Left lung (tissue), 14 donors: ENCODE measurements at regions of chr4 and their contacts with region 1.

Region 1: GRCh38 chr4:140059159-140059558 is 94.8 kb downstream of the MAML3 start:
- DNase-seq: peak in 1 of 4 donors; percentile 50
- ATAC-seq: peak; percentile 88
- H3K4me3 ChIP-seq: no peak overlapping the region
- H3K27ac ChIP-seq: peak overlapping the region in 1 of 2 donors; percentile 33
- H3K4me1 ChIP-seq: peaks cover 3 to 40% of the 10 kb centered on the region in 2 donors
- H3K27me3 ChIP-seq: no peaks in the 10 kb centered on the region
- CTCF ChIP-seq: no peak

Region 2: GRCh38 chr4:139734875-139735380 is 324.2 kb before region 1 on chr4:
- intact Hi-C with region 1: no loop called
- DNase-seq: peak; percentile 89 to 96 (median 92)
- ATAC-seq: peak; percentile 99
- H3K4me3 ChIP-seq: peak overlapping the region; percentile 31 to 45
- H3K27ac ChIP-seq: peak overlapping the region; percentile 86 to 87
- H3K4me1 ChIP-seq: peaks cover 11 to 52% of the 10 kb centered on the region in 2 donors
- H3K27me3 ChIP-seq: peaks cover 0 to 12% of the 10 kb centered on the region in 2 donors
- CTCF ChIP-seq: peak; percentile 79

Region 3: DNA sequence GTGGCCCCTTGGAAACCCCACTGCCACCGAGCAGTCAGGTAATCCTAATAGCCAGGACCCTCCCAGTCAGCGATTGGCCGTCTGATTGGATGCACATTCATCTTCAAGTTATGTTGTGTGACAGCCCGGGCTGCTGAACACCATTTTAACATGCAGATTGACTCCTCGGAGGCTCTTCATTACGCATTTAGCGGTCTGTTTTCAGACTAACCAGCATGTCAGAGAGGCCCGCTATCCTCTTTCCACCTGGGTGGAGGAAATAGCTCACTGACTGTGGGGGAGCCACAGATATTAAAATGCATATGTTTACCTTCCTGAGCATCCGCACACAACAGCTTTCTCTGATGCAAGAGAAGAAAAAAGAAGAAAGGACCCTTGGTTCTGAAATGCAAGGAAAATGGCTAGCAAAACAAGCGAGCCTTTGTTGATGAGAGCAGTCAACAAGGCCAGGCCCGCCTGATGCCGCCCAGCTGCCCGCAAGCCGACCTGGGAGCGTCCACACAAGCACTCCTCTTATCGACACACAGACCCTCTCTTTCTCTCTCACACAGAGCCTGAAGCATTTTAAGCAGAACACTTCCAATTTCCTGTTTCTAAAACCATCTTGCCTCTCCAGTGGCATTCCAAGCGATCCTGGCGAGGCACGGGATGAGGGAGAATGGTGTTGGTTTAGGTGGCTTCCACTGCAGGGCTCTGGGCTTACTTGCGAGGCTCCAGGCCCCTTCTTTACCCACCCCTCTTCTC is 275.2 kb before region 1 on chr4:
- intact Hi-C with region 1: no loop called
- DNase-seq: no peak
- ATAC-seq: no peak
- H3K4me3 ChIP-seq: no peak overlapping the region
- H3K27ac ChIP-seq: no peak overlapping the region
- H3K4me1 ChIP-seq: peaks cover 0 to 9% of the 10 kb centered on the region in 2 donors
- H3K27me3 ChIP-seq: no peaks in the 10 kb centered on the region
- CTCF ChIP-seq: no peak

Region 4: GRCh38 chr4:139956507-139957017 is 102.6 kb before region 1 on chr4:
- intact Hi-C with region 1: no loop called
- DNase-seq: peak in 2 of 4 donors; percentile 65 to 69
- ATAC-seq: peak; percentile 40
- H3K4me3 ChIP-seq: no peak overlapping the region
- H3K27ac ChIP-seq: peak overlapping the region; percentile 15 to 74
- H3K4me1 ChIP-seq: peaks cover 0 to 2% of the 10 kb centered on the region in 2 donors
- H3K27me3 ChIP-seq: no peaks in the 10 kb centered on the region
- CTCF ChIP-seq: no peak

Region 5: DNA sequence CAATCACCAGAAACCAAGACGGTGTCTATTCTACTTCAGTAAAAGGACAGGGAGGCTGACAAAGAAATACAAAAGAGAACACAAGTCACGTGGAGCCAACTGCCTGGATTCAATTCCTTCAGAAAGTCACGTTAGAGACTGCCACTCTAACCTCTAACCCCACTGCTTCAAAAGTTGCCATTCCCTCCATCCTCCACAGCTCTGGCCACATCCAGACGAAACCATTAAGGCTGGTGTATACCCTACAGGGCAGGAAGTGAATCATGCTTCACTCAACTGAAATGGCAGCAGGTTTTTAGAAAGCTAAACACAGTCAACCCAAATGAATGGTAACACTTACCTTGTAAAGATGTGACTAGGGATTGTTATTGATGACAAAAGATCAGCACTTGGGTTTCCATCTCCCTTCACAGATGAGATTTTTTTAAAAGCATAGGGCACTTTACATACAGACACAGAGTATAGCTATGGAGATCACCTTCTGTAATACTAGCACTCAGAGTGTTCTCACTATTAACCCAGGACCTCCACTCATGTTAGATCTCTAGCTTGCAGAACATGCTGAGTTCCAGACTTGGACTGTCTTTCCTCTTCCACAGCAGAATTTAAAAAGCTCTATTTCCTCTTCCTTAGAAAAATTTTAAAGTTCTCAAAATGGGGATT is 57.4 kb after region 1 on chr4:
- intact Hi-C with region 1: no loop called
- DNase-seq: no peak
- ATAC-seq: no peak
- H3K4me3 ChIP-seq: no peak overlapping the region
- H3K27ac ChIP-seq: no peak overlapping the region
- H3K4me1 ChIP-seq: peaks cover 0 to 6% of the 10 kb centered on the region in 2 donors
- H3K27me3 ChIP-seq: no peaks in the 10 kb centered on the region
- CTCF ChIP-seq: no peak

Region 6: GRCh38 chr4:140141210-140141835 is 82.2 kb after region 1 on chr4:
- intact Hi-C with region 1: loop called in 1 of 2 experiments (anchors 5 kb)
- DNase-seq: peak in 1 of 4 donors; percentile 67
- ATAC-seq: peak; percentile 78
- H3K4me3 ChIP-seq: no peak overlapping the region
- H3K27ac ChIP-seq: peak overlapping the region; percentile 0 to 43
- H3K4me1 ChIP-seq: peaks cover 12 to 18% of the 10 kb centered on the region in 2 donors
- H3K27me3 ChIP-seq: no peaks in the 10 kb centered on the region
- CTCF ChIP-seq: no peak